CD4-positive, alpha-beta memory T cell (primary cell): ENCODE measurements at regions of chr16 and their contacts with region 1.

Region 1: DNA sequence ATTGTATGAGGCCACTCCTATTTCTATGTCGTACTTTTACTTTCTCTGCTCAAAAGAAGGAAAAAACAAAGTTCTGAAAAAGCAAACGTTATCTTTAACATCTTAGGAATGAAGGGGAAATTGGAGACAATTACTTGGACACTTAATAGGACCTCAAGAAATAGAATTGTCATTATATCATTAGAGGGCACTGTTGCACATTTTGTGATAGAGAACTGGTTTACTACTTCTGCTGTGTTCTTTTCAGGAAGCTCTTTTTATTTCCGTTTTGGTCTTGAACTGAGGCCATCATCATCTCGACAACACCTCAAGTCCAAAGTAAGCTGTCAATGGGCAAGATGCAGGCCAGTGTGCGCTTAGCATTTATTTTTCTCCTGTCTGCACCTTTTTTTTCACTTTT is 14.6 kb downstream of the COG4 start:
- DNase-seq: peak in 4 of 5 donors; percentile 24 to 33 (median 27)
- H3K4me3 ChIP-seq: no peak overlapping the region
- H3K4me3 Mint-ChIP-seq: peak overlapping the region in 2 of 8 donors; percentile 36 to 44
- H3K27ac ChIP-seq: peak overlapping the region; percentile 7
- H3K27ac Mint-ChIP-seq: peak overlapping the region in 6 of 7 donors; percentile 20 to 73 (median 70)
- H3K4me1 ChIP-seq: peaks cover 8% of the 10 kb centered on the region
- H3K4me1 Mint-ChIP-seq: peaks cover 6 to 13% (median 9%) of the 10 kb centered on the region in 4 donors
- H3K27me3 ChIP-seq: no peaks in the 10 kb centered on the region
- H3K27me3 Mint-ChIP-seq: no peaks in the 10 kb centered on the region

Region 2: GRCh38 chr16:70523076-70523742 is 14.5 kb after region 1 on chr16 and contains the start of gene COG4:
- CTCF ChIA-PET with region 1: interaction called, 30 read pairs
- POLR2A ChIA-PET with region 1: interaction called, 16 read pairs
- intact Hi-C with region 1: no loop called
- DNase-seq: peak; percentile 90 to 94 (median 91)
- H3K4me3 ChIP-seq: peak within 1 kb of the TSS; percentile 90 to 97
- H3K4me3 Mint-ChIP-seq: peak within 1 kb of the TSS; percentile 96 to 99 (median 98)
- H3K27ac ChIP-seq: peak within 1 kb of the TSS; percentile 86
- H3K27ac Mint-ChIP-seq: peak within 1 kb of the TSS; percentile 97 to 100 (median 99)
- H3K4me1 ChIP-seq: peaks cover 64% of the 10 kb centered on the region
- H3K4me1 Mint-ChIP-seq: peaks cover 35 to 75% (median 54%) of the 10 kb centered on the region in 4 donors
- H3K27me3 ChIP-seq: no peaks in the 10 kb centered on the region
- H3K27me3 Mint-ChIP-seq: no peaks in the 10 kb centered on the region
- total RNA-seq, gene COG4: 66.5 to 68.9 TPM